ENCODE measurements at regions of chr5 and their contacts with region 1.

Region 1: DNA sequence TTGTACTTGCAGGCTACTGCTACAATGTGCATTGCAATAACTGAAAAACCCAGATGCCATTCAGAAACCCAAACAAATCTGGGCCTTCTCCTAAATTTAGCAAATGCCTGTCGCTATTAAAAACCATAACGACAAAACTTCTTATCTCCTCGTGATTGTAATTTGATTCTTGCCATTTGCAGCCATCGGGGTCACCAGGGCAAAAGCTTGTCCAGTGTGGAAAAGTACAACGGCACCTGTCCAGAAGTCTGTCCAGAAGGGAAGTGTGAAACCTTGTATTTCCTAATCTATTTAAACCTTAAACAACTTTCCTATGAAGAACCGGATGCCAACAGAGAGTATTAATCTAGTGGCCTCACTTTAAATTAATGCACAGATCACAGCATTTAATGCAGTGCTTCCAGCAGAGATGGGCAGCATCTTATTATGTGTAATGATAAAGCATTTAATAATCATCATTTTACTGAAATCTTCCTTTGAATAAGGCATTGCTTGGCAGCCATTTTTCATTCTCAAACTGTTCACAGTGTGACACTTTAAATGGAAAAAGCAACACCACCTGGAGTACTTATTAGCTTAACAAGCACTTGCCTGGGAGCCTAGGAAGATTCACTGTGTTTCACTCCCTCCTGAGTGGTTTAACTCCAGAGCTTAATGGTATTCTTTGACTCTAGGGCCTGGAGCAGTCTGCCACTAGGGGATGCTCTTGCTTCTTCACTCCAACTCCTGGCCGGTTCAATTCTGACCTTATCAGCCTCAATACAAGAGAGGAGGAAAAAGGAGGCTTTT is 4.9 kb upstream of the C7 start:
- DNase-seq: peak; percentile 90
- H3K4me3 ChIP-seq: no peak overlapping the region
- H3K27ac ChIP-seq: no peak overlapping the region
- H3K4me1 ChIP-seq: peaks cover 12% of the 10 kb centered on the region
- H3K27me3 ChIP-seq: no peaks in the 10 kb centered on the region
- CTCF ChIP-seq: peak; percentile 97

Region 2: GRCh38 chr5:40834849-40835787 is 69.3 kb before region 1 on chr5 and contains the start of gene RPL37:
- CTCF ChIA-PET with region 1: no interaction called
- POLR2A ChIA-PET with region 1: no interaction called
- intact Hi-C with region 1: no loop called
- DNase-seq: peak; percentile 99
- H3K4me3 ChIP-seq: peak within 1 kb of the TSS; percentile 63
- H3K27ac ChIP-seq: peak within 1 kb of the TSS; percentile 86
- H3K4me1 ChIP-seq: peaks cover 24% of the 10 kb centered on the region
- H3K27me3 ChIP-seq: no peaks in the 10 kb centered on the region
- CTCF ChIP-seq: no peak
- total RNA-seq, gene RPL37: 1,502 and 1,533 TPM in 2 replicates

Region 3: GRCh38 chr5:41270423-41271251 is 366.2 kb after region 1 on chr5:
- CTCF ChIA-PET with region 1: no interaction called
- POLR2A ChIA-PET with region 1: interaction called, 3 read pairs
- intact Hi-C with region 1: loop called (anchors 5 kb)
- DNase-seq: peak; percentile 82
- H3K4me3 ChIP-seq: no peak overlapping the region
- H3K27ac ChIP-seq: peak overlapping the region; percentile 7
- H3K4me1 ChIP-seq: peaks cover 19% of the 10 kb centered on the region
- H3K27me3 ChIP-seq: no peaks in the 10 kb centered on the region
- CTCF ChIP-seq: peak; percentile 89

Region 4: GRCh38 chr5:41524174-41524573 is 619.8 kb after region 1 on chr5:
- CTCF ChIA-PET with region 1: interaction called, 6 read pairs
- POLR2A ChIA-PET with region 1: no interaction called
- intact Hi-C with region 1: loop called (anchors 10 kb)
- DNase-seq: peak; percentile 60
- H3K4me3 ChIP-seq: no peak overlapping the region
- H3K27ac ChIP-seq: no peak overlapping the region
- H3K4me1 ChIP-seq: no peaks in the 10 kb centered on the region
- H3K27me3 ChIP-seq: no peaks in the 10 kb centered on the region
- CTCF ChIP-seq: peak; percentile 64

Region 5: DNA sequence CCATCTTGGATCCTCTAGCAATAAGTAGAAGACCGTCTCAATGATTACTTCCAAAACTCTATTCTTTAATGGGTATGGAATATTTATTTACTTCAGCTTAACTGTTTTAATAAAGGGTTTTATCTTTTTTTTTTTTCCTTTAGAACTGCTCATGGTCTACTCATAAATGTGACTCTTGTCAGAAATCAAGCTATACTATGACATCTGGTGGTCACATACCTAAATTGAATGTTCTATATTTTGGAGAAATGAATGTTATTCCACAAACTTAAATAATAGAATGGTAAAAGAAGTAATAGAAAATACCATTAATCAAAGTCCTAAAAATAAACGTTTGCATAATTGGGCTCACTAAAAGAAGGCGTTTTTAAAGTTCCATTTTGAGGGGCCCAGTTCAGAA is 737.2 kb after region 1 on chr5:
- CTCF ChIA-PET with region 1: interaction called, 10 read pairs
- POLR2A ChIA-PET with region 1: no interaction called
- intact Hi-C with region 1: loop called (anchors 2 kb)
- DNase-seq: peak; percentile 27
- H3K4me3 ChIP-seq: no peak overlapping the region
- H3K27ac ChIP-seq: no peak overlapping the region
- H3K4me1 ChIP-seq: no peaks in the 10 kb centered on the region
- H3K27me3 ChIP-seq: no peaks in the 10 kb centered on the region
- CTCF ChIP-seq: peak; percentile 45; the same call in 1 of the 2 replicates

Measured in A673 (cell line).